IMR-90 (cell line): ENCODE measurements at regions of chr2 and their contacts with region 1.

Region 1: GRCh38 chr2:143936848-143937722 is 582.8 kb downstream of the ZEB2 start:
- DNase-seq: peak; percentile 31
- ATAC-seq: peak; percentile 75
- H3K4me3 ChIP-seq: peak overlapping the region; percentile 61
- H3K27ac ChIP-seq: peak overlapping the region; percentile 61
- H3K4me1 ChIP-seq: peaks cover 14% of the 10 kb centered on the region
- H3K27me3 ChIP-seq: no peaks in the 10 kb centered on the region
- CTCF ChIP-seq: no peak
- POLR2A ChIP-seq: no peak
- RAD21 ChIP-seq: no peak

Region 2: DNA sequence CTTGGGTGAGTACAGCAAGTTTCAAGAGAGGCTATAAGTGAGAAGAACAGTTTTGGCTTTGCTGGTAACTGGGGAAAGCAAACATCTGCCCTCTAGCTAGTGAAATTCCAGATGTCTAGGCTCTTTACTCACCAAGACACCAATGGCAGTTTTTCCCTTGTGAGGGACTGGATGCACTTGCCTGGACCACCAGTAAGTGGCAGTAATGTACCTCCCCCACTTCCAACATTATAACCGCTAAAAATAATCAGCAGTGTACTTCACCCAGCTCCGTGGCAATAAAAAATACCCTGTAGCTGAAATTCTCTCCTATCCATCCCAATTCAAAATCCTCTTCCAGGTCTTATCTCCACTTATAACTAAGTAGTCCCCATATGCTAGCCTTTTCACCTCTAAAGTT is 424.0 kb before region 1 on chr2:
- CTCF ChIA-PET with region 1: interaction called, 4 read pairs
- POLR2A ChIA-PET with region 1: no interaction called
- dilution Hi-C with region 1: no loop called
- in situ Hi-C with region 1: no loop called
- intact Hi-C with region 1: loop called (anchors 2 kb)
- DNase-seq: peak; percentile 75
- ATAC-seq: peak; percentile 100
- H3K4me3 ChIP-seq: no peak overlapping the region
- H3K27ac ChIP-seq: no peak overlapping the region
- H3K4me1 ChIP-seq: no peaks in the 10 kb centered on the region; the same call in 1 of the 2 replicates
- H3K27me3 ChIP-seq: no peaks in the 10 kb centered on the region
- CTCF ChIP-seq: peak; percentile 84
- POLR2A ChIP-seq: no peak
- RAD21 ChIP-seq: peak; percentile 90

Region 3: DNA sequence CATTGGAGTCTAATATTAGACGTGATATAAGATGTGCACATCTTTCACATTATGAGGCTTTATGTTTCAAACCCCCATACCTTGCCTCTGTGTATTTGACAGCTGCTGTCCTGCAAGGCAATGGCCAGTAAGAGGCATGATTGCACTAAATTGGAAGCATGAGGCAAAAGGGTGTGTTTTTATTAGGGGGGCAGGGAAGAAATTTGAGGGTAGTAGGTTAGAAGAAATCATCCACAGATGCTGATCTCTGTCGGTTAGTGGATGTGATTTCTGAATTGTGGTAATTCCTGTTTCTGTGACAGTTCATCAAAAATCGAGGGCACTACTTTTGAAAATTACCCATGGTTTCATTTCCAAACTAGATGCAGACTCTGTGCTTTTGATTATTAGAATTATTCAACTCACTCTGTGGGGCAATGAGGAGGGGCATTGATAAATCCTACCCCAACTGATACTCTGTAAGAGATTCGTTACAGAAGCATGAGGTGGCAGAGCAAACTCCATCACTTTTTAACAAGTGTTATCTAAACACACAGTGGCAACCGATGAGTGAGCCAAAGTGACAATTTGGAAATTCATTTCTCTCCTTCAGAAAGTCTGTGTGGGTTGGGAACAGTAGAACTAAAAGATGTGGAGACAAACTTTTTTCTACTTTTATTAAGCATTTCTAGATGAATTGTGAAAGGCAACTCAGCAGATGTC is 354.9 kb before region 1 on chr2:
- CTCF ChIA-PET with region 1: no interaction called
- POLR2A ChIA-PET with region 1: no interaction called
- dilution Hi-C with region 1: no loop called
- in situ Hi-C with region 1: no loop called
- intact Hi-C with region 1: loop called (anchors 10 kb)
- DNase-seq: peak; percentile 52
- ATAC-seq: peak; percentile 85
- H3K4me3 ChIP-seq: no peak overlapping the region
- H3K27ac ChIP-seq: no peak overlapping the region
- H3K4me1 ChIP-seq: no peaks in the 10 kb centered on the region; the same call in 1 of the 2 replicates
- H3K27me3 ChIP-seq: no peaks in the 10 kb centered on the region
- CTCF ChIP-seq: peak; percentile 55
- POLR2A ChIP-seq: no peak
- RAD21 ChIP-seq: peak; percentile 63

Region 4: GRCh38 chr2:143705108-143705686 is 231.9 kb before region 1 on chr2:
- CTCF ChIA-PET with region 1: no interaction called
- POLR2A ChIA-PET with region 1: no interaction called
- dilution Hi-C with region 1: no loop called
- in situ Hi-C with region 1: no loop called
- intact Hi-C with region 1: loop called (anchors 2 kb)
- DNase-seq: peak; percentile 76
- ATAC-seq: peak; percentile 48
- H3K4me3 ChIP-seq: no peak overlapping the region
- H3K27ac ChIP-seq: peak overlapping the region; percentile 66; the same call in 1 of the 2 replicates
- H3K4me1 ChIP-seq: peaks cover 8% of the 10 kb centered on the region
- H3K27me3 ChIP-seq: no peaks in the 10 kb centered on the region
- CTCF ChIP-seq: no peak
- POLR2A ChIP-seq: no peak
- RAD21 ChIP-seq: no peak

Region 5: GRCh38 chr2:143802871-143803650 is 134.0 kb before region 1 on chr2:
- CTCF ChIA-PET with region 1: no interaction called
- POLR2A ChIA-PET with region 1: no interaction called
- dilution Hi-C with region 1: no loop called
- in situ Hi-C with region 1: no loop called
- intact Hi-C with region 1: loop called (anchors 5 kb)
- DNase-seq: peak; percentile 28
- ATAC-seq: peak; percentile 13; the same call in 1 of the 2 replicates
- H3K4me3 ChIP-seq: no peak overlapping the region
- H3K27ac ChIP-seq: peak overlapping the region; percentile 85
- H3K4me1 ChIP-seq: peaks cover 18% of the 10 kb centered on the region
- H3K27me3 ChIP-seq: no peaks in the 10 kb centered on the region
- CTCF ChIP-seq: no peak
- POLR2A ChIP-seq: no peak
- RAD21 ChIP-seq: no peak

Region 6: GRCh38 chr2:143856978-143857377 is 80.1 kb before region 1 on chr2:
- CTCF ChIA-PET with region 1: no interaction called
- POLR2A ChIA-PET with region 1: no interaction called
- dilution Hi-C with region 1: no loop called
- in situ Hi-C with region 1: no loop called
- intact Hi-C with region 1: no loop called
- DNase-seq: peak; percentile 48
- ATAC-seq: peak; percentile 71
- H3K4me3 ChIP-seq: no peak overlapping the region
- H3K27ac ChIP-seq: no peak overlapping the region
- H3K4me1 ChIP-seq: no peaks in the 10 kb centered on the region
- H3K27me3 ChIP-seq: no peaks in the 10 kb centered on the region
- CTCF ChIP-seq: no peak
- POLR2A ChIP-seq: no peak
- RAD21 ChIP-seq: no peak

Region 7: DNA sequence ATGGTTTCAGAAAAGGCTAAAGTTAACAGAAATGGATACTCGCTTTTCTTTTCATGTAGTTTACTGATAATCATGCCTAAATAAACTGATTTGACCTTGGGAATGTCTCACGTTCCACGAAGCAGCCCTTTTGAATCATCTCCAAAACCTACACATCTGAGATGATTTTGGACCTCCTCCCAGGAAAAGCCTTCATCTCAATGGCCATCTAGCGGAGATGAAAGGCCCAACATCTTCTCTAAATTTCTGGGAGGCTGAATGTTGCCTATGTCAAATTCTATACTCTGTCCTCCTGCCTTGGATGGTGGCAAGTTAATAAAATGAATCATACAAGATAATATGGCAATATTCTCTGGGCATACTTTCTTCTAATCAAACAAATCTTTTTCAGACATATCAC is 134.4 kb after region 1 on chr2:
- CTCF ChIA-PET with region 1: interaction called, 3 read pairs
- POLR2A ChIA-PET with region 1: no interaction called
- dilution Hi-C with region 1: no loop called
- in situ Hi-C with region 1: no loop called
- intact Hi-C with region 1: loop called (anchors 5 kb)
- DNase-seq: peak; percentile 81
- ATAC-seq: peak; percentile 75
- H3K4me3 ChIP-seq: no peak overlapping the region
- H3K27ac ChIP-seq: no peak overlapping the region
- H3K4me1 ChIP-seq: no peaks in the 10 kb centered on the region
- H3K27me3 ChIP-seq: no peaks in the 10 kb centered on the region
- CTCF ChIP-seq: peak; percentile 64
- POLR2A ChIP-seq: no peak
- RAD21 ChIP-seq: peak; percentile 70

Region 8: GRCh38 chr2:144332356-144333142 is 395.5 kb after region 1 on chr2:
- CTCF ChIA-PET with region 1: no interaction called
- POLR2A ChIA-PET with region 1: no interaction called
- dilution Hi-C with region 1: no loop called
- in situ Hi-C with region 1: no loop called
- intact Hi-C with region 1: loop called (anchors 5 kb)
- DNase-seq: peak; percentile 83
- ATAC-seq: peak; percentile 96
- H3K4me3 ChIP-seq: peak overlapping the region; percentile 87
- H3K27ac ChIP-seq: no peak overlapping the region; the same call in 1 of the 2 replicates
- H3K4me1 ChIP-seq: no peaks in the 10 kb centered on the region
- H3K27me3 ChIP-seq: no peaks in the 10 kb centered on the region
- CTCF ChIP-seq: no peak
- POLR2A ChIP-seq: peak; percentile 63; the same call in 1 of the 2 replicates
- RAD21 ChIP-seq: peak; percentile 2